ENCODE measurements at regions of chr15 and their contacts with region 1.

Region 1: GRCh38 chr15:34223904-34224596 is 766 bp upstream of the EMC4 start:
- DNase-seq: no peak
- ATAC-seq: no peak
- H3K4me3 ChIP-seq: peak overlapping the region; percentile 82
- H3K4me3 Mint-ChIP-seq: peak overlapping the region; percentile 88 to 100 (median 94)
- H3K27ac ChIP-seq: peak overlapping the region; percentile 83
- H3K27ac Mint-ChIP-seq: peak overlapping the region; percentile 93 to 100 (median 99)
- H3K4me1 ChIP-seq: peaks cover 5 to 13% of the 10 kb centered on the region in 2 donors
- H3K4me1 Mint-ChIP-seq: peaks cover 9 to 35% (median 30%) of the 10 kb centered on the region in 7 donors
- H3K27me3 ChIP-seq: no peaks in the 10 kb centered on the region
- H3K27me3 Mint-ChIP-seq: peaks cover 0 to 5% (median 0%) of the 10 kb centered on the region in 5 donors

Region 2: DNA sequence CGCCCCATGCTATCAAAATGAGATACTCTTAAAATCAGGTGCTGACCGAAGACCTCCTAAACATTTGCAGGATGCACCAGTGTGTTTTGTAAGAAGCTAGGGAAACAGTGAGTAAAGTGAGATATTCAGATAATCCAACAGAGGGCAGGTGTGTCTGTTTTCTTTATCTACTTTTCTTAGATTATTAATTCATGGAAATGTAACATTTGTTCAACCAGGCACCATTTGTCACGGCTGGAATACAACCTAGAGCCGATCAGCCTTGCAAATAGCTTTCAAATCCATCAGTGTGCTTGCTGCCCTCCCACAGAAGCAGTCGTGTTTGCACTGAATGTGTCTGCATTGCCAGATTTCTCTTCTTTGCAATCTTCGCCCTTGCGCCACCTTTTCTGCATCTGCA is 457.7 kb before region 1 on chr15:
- CTCF ChIA-PET with region 1: no interaction called
- POLR2A ChIA-PET with region 1: no interaction called
- intact Hi-C with region 1: no loop called
- DNase-seq: no peak
- ATAC-seq: no peak
- H3K4me3 ChIP-seq: no peak overlapping the region
- H3K4me3 Mint-ChIP-seq: no peak overlapping the region
- H3K27ac ChIP-seq: no peak overlapping the region
- H3K27ac Mint-ChIP-seq: no peak overlapping the region
- H3K4me1 ChIP-seq: no peaks in the 10 kb centered on the region
- H3K4me1 Mint-ChIP-seq: no peaks in the 10 kb centered on the region
- H3K27me3 ChIP-seq: no peaks in the 10 kb centered on the region
- H3K27me3 Mint-ChIP-seq: peaks cover 8 to 21% (median 12%) of the 10 kb centered on the region in 5 donors

Region 3: GRCh38 chr15:34101366-34102175 is 122.5 kb before region 1 on chr15 and contains the starts of genes EMC7 and PGBD4:
- CTCF ChIA-PET with region 1: no interaction called
- POLR2A ChIA-PET with region 1: interaction called, 23 read pairs
- intact Hi-C with region 1: loop called (anchors 1 kb)
- DNase-seq: peak; percentile 98 to 99 (median 99)
- ATAC-seq: peak; percentile 99
- H3K4me3 ChIP-seq: peak within 1 kb of the TSS; percentile 66
- H3K4me3 Mint-ChIP-seq: peak within 1 kb of the TSS; percentile 91 to 100 (median 96)
- H3K27ac ChIP-seq: peak within 1 kb of the TSS; percentile 96
- H3K27ac Mint-ChIP-seq: peak within 1 kb of the TSS; percentile 97 to 100 (median 98)
- H3K4me1 ChIP-seq: peaks cover 16 to 27% of the 10 kb centered on the region in 2 donors
- H3K4me1 Mint-ChIP-seq: peaks cover 15 to 56% (median 45%) of the 10 kb centered on the region in 7 donors
- H3K27me3 ChIP-seq: no peaks in the 10 kb centered on the region
- H3K27me3 Mint-ChIP-seq: peaks cover 0 to 3% (median 0%) of the 10 kb centered on the region in 5 donors
- total RNA-seq, gene EMC7: 30.1 to 65.1 (median 36.9) TPM
- total RNA-seq, gene PGBD4: 3.2 to 6.5 (median 4.2) TPM

Region 4: DNA sequence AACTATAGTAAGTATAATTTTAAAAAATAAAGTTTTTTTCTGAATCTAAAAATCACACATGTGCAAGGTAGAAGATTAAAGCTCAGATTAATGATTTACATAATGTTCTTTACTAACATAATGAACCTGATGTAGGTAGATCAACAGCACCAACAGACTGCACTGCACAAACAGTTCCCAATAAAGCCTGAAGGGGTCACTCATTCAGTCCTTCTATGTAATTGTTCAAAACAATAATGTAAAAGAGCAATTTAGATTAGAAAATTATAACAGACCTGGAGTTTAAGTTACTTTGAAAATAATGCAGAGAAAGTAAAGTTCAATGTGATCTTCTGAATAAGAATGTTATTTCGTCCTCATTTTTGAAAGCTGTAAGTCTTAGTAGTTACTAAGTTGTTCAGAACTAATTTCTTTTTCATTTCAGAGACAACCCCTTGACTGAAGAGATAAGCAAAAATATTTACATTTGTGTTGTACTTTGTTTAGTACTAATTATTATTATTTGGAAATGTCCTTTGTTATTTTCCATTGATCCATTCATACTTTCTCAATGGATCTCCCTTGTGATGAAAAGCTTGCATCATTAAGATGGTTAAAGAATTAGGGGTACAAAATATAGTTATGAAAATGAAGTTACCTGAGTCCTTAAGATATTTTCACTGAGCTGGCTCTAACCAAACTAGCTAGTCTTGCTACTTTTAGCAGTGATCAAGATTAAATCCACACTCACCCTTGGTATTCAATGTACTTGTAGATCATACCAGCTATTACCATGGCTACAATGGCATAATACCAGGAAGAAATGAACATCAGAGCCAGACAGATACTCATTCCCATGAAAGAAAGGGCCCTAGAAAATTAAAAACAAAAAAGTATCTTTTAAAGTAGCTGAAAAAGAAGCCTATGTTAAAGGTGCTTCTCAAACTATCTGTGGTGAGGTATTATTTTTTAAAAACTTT is 17.6 kb after region 1 on chr15:
- CTCF ChIA-PET with region 1: interaction called, 5 read pairs
- POLR2A ChIA-PET with region 1: interaction called, 3 read pairs
- intact Hi-C with region 1: loop called in 1 of 2 experiments (anchors 1 kb)
- DNase-seq: peak in 7 of 9 donors; percentile 38 to 65 (median 52)
- ATAC-seq: peak; percentile 91
- H3K4me3 ChIP-seq: no peak overlapping the region
- H3K4me3 Mint-ChIP-seq: no peak overlapping the region
- H3K27ac ChIP-seq: no peak overlapping the region
- H3K27ac Mint-ChIP-seq: peak overlapping the region in 7 of 9 donors; percentile 7 to 75 (median 47)
- H3K4me1 ChIP-seq: no peaks in the 10 kb centered on the region
- H3K4me1 Mint-ChIP-seq: peaks cover 0 to 13% (median 4%) of the 10 kb centered on the region in 7 donors
- H3K27me3 ChIP-seq: no peaks in the 10 kb centered on the region
- H3K27me3 Mint-ChIP-seq: no peaks in the 10 kb centered on the region

Region 5: DNA sequence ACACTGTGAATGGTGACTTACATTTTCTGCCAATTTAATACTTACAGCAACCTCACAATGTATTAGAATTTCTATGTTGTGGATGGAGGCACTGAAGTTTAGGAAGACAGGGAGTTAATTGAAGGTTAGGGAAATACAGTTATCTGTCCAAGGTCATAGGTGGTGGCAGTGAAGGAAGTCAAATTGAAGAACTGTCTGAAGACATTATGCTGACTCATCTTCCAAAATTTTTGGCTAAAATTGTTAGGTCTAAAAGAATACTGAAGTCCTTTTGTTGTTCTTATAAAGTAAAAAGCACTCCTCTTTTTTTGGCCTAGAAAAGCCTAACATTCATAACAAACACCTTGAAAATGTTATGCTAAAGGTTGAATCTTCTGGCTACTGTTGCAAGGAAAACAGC is 28.5 kb after region 1 on chr15:
- CTCF ChIA-PET with region 1: no interaction called
- POLR2A ChIA-PET with region 1: no interaction called
- intact Hi-C with region 1: no loop called
- DNase-seq: no peak
- ATAC-seq: no peak
- H3K4me3 ChIP-seq: no peak overlapping the region
- H3K4me3 Mint-ChIP-seq: no peak overlapping the region
- H3K27ac ChIP-seq: no peak overlapping the region
- H3K27ac Mint-ChIP-seq: peak overlapping the region in 1 of 9 donors; percentile 52
- H3K4me1 ChIP-seq: no peaks in the 10 kb centered on the region
- H3K4me1 Mint-ChIP-seq: peaks cover 0 to 6% (median 0%) of the 10 kb centered on the region in 7 donors
- H3K27me3 ChIP-seq: no peaks in the 10 kb centered on the region
- H3K27me3 Mint-ChIP-seq: no peaks in the 10 kb centered on the region

Region 6: DNA sequence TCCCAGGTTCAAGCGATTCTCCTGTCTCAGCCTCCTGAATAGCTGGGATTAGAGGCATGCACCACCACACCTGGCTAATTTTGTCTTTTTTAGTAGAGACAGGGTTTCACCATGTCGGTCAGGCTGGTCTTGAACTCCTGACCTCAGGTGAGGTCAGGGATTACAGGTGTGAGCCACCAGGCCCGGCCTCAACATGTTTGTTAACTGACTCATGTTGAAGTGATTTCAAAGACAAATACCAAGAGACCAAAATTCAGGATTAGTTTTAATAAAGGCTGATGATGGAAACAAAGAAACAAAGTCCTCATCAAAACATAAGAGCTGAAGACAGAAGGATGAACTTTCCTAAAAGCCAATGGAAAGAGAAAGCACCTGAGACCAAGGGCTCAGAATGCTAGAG is 77.0 kb after region 1 on chr15:
- CTCF ChIA-PET with region 1: no interaction called
- POLR2A ChIA-PET with region 1: no interaction called
- intact Hi-C with region 1: no loop called
- DNase-seq: no peak
- ATAC-seq: no peak
- H3K4me3 ChIP-seq: no peak overlapping the region
- H3K4me3 Mint-ChIP-seq: no peak overlapping the region
- H3K27ac ChIP-seq: no peak overlapping the region
- H3K27ac Mint-ChIP-seq: peak overlapping the region in 1 of 9 donors; percentile 46
- H3K4me1 ChIP-seq: peaks cover 0 to 11% of the 10 kb centered on the region in 2 donors
- H3K4me1 Mint-ChIP-seq: peaks cover 5 to 100% (median 78%) of the 10 kb centered on the region in 7 donors
- H3K27me3 ChIP-seq: no peaks in the 10 kb centered on the region
- H3K27me3 Mint-ChIP-seq: no peaks in the 10 kb centered on the region

Region 7: GRCh38 chr15:34437687-34438086 is 213.6 kb after region 1 on chr15 and contains the start of gene GOLGA8A:
- CTCF ChIA-PET with region 1: no interaction called
- POLR2A ChIA-PET with region 1: no interaction called
- intact Hi-C with region 1: loop called in 1 of 2 experiments (anchors 10 kb)
- DNase-seq: peak in 8 of 9 donors; percentile 62 to 88 (median 82)
- ATAC-seq: peak; percentile 88
- H3K4me3 ChIP-seq: peak within 1 kb of the TSS; percentile 51
- H3K4me3 Mint-ChIP-seq: peak within 1 kb of the TSS in 9 of 10 donors; percentile 81 to 98 (median 95)
- H3K27ac ChIP-seq: peak within 1 kb of the TSS; percentile 60
- H3K27ac Mint-ChIP-seq: peak within 1 kb of the TSS in 8 of 9 donors; percentile 78 to 96 (median 94)
- H3K4me1 ChIP-seq: peaks cover 6 to 12% of the 10 kb centered on the region in 2 donors
- H3K4me1 Mint-ChIP-seq: peaks cover 3 to 32% (median 21%) of the 10 kb centered on the region in 7 donors
- H3K27me3 ChIP-seq: no peaks in the 10 kb centered on the region
- H3K27me3 Mint-ChIP-seq: peaks cover 0 to 16% (median under 1%) of the 10 kb centered on the region in 5 donors
- total RNA-seq, gene GOLGA8A: 147 to 361 (median 158) TPM

Measured in naive thymus-derived CD4-positive, alpha-beta T cell (primary cell).